ENCODE measurements at regions of chr10 and their contacts with region 1.

Region 1: DNA sequence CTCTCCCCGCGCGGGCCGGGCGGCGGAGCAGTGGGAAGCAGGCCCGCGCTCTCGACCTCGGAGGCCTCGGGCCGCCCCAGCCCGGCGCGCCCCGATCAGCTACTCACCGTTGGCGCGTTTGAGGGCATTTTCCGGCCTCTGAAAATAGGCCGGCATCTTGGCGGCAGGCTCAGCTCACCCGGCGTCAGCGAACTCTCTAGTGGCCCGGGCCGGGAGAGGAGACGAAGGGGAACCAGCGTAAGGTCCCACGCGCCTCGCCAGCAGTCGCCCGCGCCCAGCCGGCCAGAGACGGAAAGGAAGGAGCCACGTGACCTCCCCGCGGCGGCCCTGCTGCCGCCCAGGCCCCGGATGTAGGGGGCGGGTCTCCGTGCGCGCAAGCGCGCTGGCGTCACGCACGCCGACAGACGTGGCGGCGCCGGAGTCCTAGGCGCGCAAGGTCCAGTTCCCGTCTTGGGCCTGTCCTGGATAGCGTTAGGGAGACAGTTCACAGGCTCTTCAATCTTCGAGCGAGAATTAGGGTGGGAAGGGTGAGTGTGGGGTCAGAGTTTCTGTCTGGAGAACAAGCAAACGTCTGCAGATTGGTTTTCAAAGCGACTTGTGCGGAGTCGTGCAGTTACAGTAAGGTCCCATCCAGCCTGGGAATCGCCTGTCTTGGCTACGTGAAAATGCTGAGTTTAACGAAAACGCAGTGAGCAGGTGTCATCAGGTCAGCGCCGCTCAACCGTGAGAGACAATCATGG is at the start of gene EIF3A:
- DNase-seq: peak; percentile 97
- ATAC-seq: peak; percentile 79
- H3K4me3 Mint-ChIP-seq: peak within 1 kb of the TSS; percentile 89
- H3K27ac Mint-ChIP-seq: peak within 1 kb of the TSS; percentile 93
- H3K4me1 Mint-ChIP-seq: peaks cover 49% of the 10 kb centered on the region
- H3K27me3 Mint-ChIP-seq: no peaks in the 10 kb centered on the region
- CTCF ChIP-seq: no peak
- total RNA-seq, gene EIF3A: 109 and 114 TPM in 2 replicates

Region 2: GRCh38 chr10:119030421-119031250 is 50.1 kb before region 1 on chr10:
- CTCF ChIA-PET with region 1: no interaction called
- POLR2A ChIA-PET with region 1: interaction called, 3 read pairs
- intact Hi-C with region 1: loop called (anchors 1 kb)
- DNase-seq: peak; percentile 72
- ATAC-seq: peak; percentile 80
- H3K4me3 Mint-ChIP-seq: peak overlapping the region; percentile 75
- H3K27ac Mint-ChIP-seq: peak overlapping the region; percentile 68
- H3K4me1 Mint-ChIP-seq: peaks cover 22% of the 10 kb centered on the region
- H3K27me3 Mint-ChIP-seq: peaks cover 23% of the 10 kb centered on the region
- CTCF ChIP-seq: no peak

Region 3: DNA sequence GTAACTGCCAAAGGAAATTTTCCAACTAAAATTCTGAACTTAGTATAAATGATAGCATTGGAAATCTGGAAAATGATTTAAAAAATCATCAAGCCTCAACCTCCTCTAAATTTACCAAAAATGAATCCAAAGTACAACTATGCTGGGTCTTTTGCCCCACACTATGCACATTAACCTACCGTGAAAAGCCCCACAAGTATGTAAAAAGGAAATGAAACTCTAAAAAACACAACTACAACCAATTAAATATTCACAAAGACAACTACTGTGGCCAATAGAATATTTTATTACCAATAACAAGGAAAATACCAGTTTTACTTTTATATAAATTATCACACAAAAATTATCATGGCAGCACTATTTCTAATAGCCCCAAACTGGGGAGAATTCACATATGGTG is 19.3 kb before region 1 on chr10:
- CTCF ChIA-PET with region 1: no interaction called
- POLR2A ChIA-PET with region 1: interaction called, 3 read pairs
- intact Hi-C with region 1: loop called (anchors 2 kb)
- DNase-seq: no peak
- ATAC-seq: peak; percentile 42
- H3K4me3 Mint-ChIP-seq: no peak overlapping the region
- H3K27ac Mint-ChIP-seq: peak overlapping the region; percentile 59
- H3K4me1 Mint-ChIP-seq: peaks cover 19% of the 10 kb centered on the region
- H3K27me3 Mint-ChIP-seq: no peaks in the 10 kb centered on the region
- CTCF ChIP-seq: no peak

Region 4: GRCh38 chr10:119131512-119132240 is 51.0 kb after region 1 on chr10:
- CTCF ChIA-PET with region 1: no interaction called
- POLR2A ChIA-PET with region 1: interaction called, 5 read pairs
- intact Hi-C with region 1: loop called (anchors 5 kb)
- DNase-seq: no peak
- ATAC-seq: peak; percentile 64
- H3K4me3 Mint-ChIP-seq: peak overlapping the region; percentile 84
- H3K27ac Mint-ChIP-seq: peak overlapping the region; percentile 85
- H3K4me1 Mint-ChIP-seq: peaks cover 17% of the 10 kb centered on the region
- H3K27me3 Mint-ChIP-seq: no peaks in the 10 kb centered on the region
- CTCF ChIP-seq: no peak

Region 5: DNA sequence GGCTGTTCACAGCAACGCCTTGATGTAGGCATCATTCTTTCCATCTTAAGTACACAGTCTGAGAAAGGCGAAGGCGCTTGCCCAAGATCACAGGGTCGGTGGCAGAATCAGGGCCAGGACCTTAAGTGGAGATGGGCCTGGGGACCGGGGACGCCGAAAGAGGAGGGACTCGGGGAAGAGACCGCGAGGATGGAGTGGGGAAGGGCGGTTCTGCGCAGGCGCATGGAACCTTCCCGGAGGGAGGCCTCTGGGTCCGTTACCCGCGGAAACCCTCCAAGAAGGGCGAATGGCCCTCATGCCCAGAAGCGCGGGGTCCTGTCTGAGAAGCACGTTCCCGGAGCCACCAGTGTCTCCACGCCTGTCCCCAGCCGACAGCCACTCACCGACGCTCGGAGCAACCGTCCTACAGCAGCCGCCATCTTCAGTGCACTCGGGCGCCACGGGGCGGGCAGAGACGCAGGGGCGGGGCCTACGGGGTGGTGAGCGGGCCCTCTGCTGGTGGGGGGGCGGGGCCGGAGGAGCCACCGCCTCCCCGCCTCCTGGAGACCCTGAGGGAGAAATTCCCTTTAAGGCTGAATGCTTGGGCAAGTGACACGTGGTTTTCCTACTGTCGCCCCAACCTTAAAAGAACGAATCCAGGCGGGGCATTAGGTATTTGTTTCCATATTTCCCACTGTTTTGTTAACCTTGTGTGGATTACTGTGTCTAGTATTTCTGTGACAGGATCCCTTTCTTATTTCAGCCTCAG is 97.9 kb after region 1 on chr10 and contains the start of gene PRDX3:
- CTCF ChIA-PET with region 1: no interaction called
- POLR2A ChIA-PET with region 1: interaction called, 8 read pairs
- intact Hi-C with region 1: loop called (anchors 1 kb)
- DNase-seq: peak; percentile 92
- ATAC-seq: peak; percentile 99
- H3K4me3 Mint-ChIP-seq: peak within 1 kb of the TSS; percentile 98
- H3K27ac Mint-ChIP-seq: peak within 1 kb of the TSS; percentile 93
- H3K4me1 Mint-ChIP-seq: peaks cover 26% of the 10 kb centered on the region
- H3K27me3 Mint-ChIP-seq: no peaks in the 10 kb centered on the region
- CTCF ChIP-seq: no peak
- total RNA-seq, gene PRDX3: 62.8 and 63.7 TPM in 2 replicates

Region 6: DNA sequence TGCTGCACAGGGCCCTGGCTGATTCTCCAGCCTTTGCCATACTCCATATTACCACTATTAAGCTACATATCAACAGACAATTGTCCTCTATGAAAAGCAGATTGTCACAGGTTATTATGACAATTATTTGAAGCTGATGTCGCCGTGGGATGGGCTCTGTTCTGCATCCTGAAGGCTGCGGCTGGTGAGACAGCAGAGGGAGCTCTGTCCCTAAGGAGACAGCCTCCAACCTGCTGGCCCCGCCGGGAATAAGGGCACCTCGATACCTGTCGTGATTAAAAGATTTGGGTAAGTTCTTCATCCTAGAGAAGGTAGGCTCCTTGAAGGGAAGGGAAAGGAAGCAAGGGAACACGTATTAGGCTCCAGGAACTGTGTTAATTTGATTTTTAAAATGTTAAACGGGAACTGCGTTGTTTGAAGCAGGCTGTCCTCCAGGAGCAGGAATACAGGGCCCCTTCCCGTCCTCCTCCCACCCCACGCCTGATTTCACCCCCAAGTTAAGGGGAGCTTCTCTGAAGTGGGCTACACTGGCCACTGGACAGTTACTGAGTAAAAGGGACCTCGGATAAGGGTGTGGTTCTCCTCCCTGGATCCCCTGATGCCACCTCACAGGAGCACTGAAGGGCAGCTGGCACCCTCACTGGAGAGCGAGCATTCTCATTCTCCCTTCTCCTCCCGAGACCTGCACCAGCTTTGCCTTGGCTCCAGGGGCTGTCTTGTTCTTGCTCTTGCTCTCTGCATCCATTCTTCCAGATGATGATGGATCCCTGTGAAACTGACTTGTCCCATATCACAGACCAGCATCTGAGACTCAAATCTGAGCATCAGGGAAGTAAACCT is 527.8 kb after region 1 on chr10:
- CTCF ChIA-PET with region 1: no interaction called
- POLR2A ChIA-PET with region 1: no interaction called
- intact Hi-C with region 1: no loop called
- DNase-seq: no peak
- ATAC-seq: no peak
- H3K4me3 Mint-ChIP-seq: no peak overlapping the region
- H3K27ac Mint-ChIP-seq: no peak overlapping the region
- H3K4me1 Mint-ChIP-seq: peaks cover 3% of the 10 kb centered on the region
- H3K27me3 Mint-ChIP-seq: peaks cover 2% of the 10 kb centered on the region
- CTCF ChIP-seq: no peak

Region 7: DNA sequence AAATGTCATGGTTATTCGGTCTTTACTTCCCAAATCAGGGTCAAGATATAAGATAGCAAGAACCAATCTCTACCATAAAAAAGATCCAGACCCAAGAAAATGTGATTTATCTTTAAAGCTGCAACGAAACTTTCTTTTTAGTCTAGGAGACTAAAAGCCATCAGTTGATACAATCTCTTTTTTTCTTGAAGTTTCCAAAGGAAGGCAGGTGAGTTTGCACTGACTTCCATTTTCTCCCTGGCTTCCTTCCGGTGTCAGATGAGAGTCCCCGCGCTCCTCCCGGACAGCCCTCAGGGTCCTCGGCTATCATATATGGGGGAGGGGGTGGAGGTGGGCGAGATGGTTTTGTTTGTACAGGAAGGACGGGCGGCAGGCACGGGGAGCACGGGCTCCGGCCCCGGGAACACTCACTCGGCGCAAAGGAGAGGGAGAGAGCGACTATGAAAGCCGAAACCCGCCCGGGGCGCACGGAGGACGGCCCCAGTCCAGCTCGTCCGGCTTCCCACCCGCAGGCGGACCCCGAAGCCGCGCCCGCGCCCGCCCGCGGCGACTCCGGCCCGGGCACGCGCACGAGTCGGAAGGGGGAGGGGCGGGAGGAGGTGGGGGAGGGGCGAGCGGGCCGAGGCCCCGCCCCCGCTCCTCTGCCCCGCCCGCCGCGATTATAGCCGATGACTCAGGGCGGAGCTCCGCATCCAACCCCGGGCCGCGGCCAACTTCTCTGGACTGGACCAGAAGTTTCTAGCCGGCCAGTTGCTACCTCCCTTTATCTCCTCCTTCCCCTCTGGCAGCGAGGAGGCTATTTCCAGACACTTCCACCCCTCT is 570.2 kb after region 1 on chr10 and contains the start of gene BAG3:
- CTCF ChIA-PET with region 1: no interaction called
- POLR2A ChIA-PET with region 1: no interaction called
- intact Hi-C with region 1: loop called (anchors 1 kb)
- DNase-seq: peak; percentile 73
- ATAC-seq: peak; percentile 93
- H3K4me3 Mint-ChIP-seq: peak within 1 kb of the TSS; percentile 97
- H3K27ac Mint-ChIP-seq: peak within 1 kb of the TSS; percentile 95
- H3K4me1 Mint-ChIP-seq: peaks cover 16% of the 10 kb centered on the region
- H3K27me3 Mint-ChIP-seq: no peaks in the 10 kb centered on the region
- CTCF ChIP-seq: no peak
- total RNA-seq, gene BAG3: 4.3 and 4.7 TPM in 2 replicates

Measured in activated B cell treated with CpG ODN at 0.5 μM for 24 hours (primary cell).